HepG2 (cell line): ENCODE measurements at regions of chr1 and their contacts with region 1.

Region 1: DNA sequence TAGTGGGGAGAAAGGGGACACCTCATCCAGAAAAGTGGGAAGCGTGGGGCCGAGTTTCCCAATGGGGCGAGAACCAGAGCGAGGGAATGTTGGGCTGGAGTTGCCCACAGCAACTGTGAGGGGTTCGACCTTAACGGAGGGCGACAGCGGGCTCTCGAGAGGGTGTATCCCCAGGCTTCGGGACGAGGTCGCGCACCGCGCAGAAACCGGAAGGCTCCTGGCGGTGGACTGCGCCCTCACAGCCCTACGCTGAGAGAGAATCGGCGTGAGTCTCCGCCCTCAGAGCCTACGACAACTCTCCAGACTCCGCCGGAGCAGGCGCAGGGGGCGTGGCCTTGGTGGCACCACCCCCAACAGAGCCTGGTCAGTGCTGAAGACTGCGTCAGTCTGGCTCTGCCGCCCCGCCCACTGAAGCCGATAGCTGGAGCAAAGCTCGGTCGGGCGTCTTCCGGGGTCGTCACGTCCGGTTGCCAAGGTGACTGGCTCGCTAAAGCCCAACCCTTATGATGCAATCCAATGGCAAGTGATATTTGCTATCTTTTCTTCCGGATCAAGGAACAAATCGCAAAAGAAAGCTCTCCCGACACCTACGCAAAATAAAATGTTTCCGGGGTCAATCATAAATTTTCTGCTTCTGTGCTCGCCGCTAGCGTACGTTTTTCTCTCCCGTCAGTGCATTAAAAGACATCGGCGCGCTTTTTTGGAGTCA is at the start of gene LRIF1:
- DNase-seq: peak; percentile 99
- ATAC-seq: peak; percentile 99
- H3K4me3 ChIP-seq: peak within 1 kb of the TSS; percentile 79 to 92 (median 90)
- H3K27ac ChIP-seq: peak within 1 kb of the TSS; percentile 99
- H3K4me1 ChIP-seq: peaks cover 33% of the 10 kb centered on the region
- H3K27me3 ChIP-seq: no peaks in the 10 kb centered on the region; a peak in 1 of 5 replicates
- CTCF ChIP-seq: peak; percentile 47
- EP300 ChIP-seq: peak; percentile 3 to 7; a peak in 1 of 4 replicates
- POLR2A ChIP-seq: peak; percentile 98 to 100
- RAD21 ChIP-seq: no peak
- total RNA-seq, gene LRIF1: 42.4 and 67.4 TPM in 2 replicates

Region 2: DNA sequence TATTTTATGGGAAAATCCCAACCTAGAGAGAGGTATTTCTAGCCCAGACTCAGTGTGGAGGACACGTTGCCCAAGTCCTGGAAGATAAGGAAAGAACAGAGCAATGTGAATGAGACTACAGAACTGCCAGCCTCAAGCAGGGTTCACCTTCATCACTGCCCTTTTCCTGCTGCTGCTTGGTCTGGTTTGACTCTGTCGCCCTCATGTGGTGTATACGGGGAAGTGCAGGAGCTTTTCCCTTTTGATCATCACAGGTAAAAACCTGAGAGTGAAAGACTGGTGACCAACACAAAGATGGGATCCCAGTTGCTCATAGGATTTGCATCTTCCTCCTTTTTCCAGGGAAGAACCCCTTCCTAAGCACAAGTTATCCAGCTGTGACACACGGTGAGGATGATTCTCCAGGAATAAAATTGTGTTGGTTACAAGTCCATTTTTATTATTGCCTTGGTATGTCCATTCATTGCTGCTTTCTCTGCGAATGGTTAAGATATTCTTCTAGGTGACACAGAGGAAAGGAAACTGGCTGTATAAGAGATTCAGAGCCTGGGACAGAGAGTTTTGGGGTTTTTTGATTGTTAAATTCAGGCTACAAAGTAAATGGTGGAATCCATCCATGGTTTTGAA is 180.4 kb before region 1 on chr1:
- CTCF ChIA-PET with region 1: no interaction called
- POLR2A ChIA-PET with region 1: no interaction called
- in situ Hi-C with region 1: no loop called
- intact Hi-C with region 1: no loop called
- DNase-seq: peak; percentile 47
- ATAC-seq: peak; percentile 70
- H3K4me3 ChIP-seq: no peak overlapping the region
- H3K27ac ChIP-seq: no peak overlapping the region
- H3K4me1 ChIP-seq: no peaks in the 10 kb centered on the region
- H3K27me3 ChIP-seq: no peaks in the 10 kb centered on the region
- CTCF ChIP-seq: peak; percentile 86
- EP300 ChIP-seq: no peak
- POLR2A ChIP-seq: no peak
- RAD21 ChIP-seq: peak; percentile 48; the same call in 1 of the 2 replicates

Region 3: DNA sequence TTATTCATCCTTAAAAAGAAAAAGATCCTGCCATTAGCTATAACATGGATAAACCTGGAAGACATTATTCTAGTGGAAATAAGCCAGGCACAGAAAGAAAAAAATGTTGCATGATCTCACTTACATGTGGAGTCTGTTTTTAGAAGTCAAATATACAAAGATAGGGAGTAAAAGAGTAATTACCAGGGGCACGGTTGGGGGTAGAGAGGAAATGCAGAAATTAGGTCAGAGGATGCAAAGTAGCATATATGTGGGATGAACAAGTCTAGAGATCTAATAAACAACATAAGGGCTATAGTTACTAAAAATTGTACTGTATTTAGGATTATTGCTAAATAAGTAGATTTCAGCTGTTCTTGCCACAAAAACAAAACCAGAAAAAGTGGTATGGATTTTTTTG is 152.3 kb before region 1 on chr1:
- CTCF ChIA-PET with region 1: no interaction called
- POLR2A ChIA-PET with region 1: no interaction called
- in situ Hi-C with region 1: no loop called
- intact Hi-C with region 1: no loop called
- DNase-seq: no peak
- ATAC-seq: no peak
- H3K4me3 ChIP-seq: no peak overlapping the region
- H3K27ac ChIP-seq: no peak overlapping the region
- H3K4me1 ChIP-seq: no peaks in the 10 kb centered on the region
- H3K27me3 ChIP-seq: no peaks in the 10 kb centered on the region
- CTCF ChIP-seq: no peak
- EP300 ChIP-seq: no peak
- POLR2A ChIP-seq: no peak
- RAD21 ChIP-seq: no peak

Region 4: DNA sequence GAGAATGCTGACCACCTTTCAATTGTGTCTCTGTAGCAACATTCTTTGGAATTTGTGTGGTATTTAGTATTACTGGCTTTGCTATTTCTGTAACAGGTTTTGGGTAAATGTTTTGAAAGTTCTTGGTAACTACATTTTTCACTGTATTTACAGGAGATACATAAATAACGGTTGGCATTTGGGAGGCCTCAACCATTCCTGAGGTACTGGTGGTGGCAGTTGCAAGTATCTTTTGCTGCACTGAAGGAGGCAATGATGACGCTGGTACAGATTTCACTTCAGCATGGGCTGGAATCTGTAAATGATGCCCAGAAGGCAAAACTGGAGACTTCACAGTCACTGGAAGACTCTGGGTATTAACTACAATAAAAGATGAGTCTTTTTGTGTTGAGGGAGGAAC is 11.8 kb before region 1 on chr1:
- CTCF ChIA-PET with region 1: no interaction called
- POLR2A ChIA-PET with region 1: interaction called, 17 read pairs
- in situ Hi-C with region 1: no loop called
- intact Hi-C with region 1: no loop called
- DNase-seq: no peak
- ATAC-seq: no peak
- H3K4me3 ChIP-seq: no peak overlapping the region
- H3K27ac ChIP-seq: no peak overlapping the region
- H3K4me1 ChIP-seq: peaks cover 20% of the 10 kb centered on the region; the same call in 1 of the 2 replicates
- H3K27me3 ChIP-seq: no peaks in the 10 kb centered on the region
- CTCF ChIP-seq: no peak
- EP300 ChIP-seq: no peak
- POLR2A ChIP-seq: no peak
- RAD21 ChIP-seq: no peak

Region 5: DNA sequence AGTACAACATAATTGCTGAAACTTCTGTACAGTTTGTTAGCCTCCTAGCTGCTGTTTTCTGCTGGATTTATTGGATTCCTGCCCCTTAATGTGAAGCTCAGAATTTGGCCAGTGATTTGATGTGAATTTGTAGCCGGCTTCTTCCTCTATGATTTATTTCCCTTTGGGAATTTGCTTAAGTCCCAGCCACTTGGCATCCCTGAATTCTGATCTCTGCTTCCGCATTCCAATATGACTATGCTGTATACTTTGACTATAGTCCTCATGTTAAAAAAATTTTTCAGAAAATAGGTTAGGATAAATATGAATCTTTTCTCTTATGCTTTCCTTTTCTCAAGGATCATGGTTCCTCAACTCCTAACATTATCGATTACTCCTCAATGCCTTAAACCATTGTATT is 12.2 kb after region 1 on chr1:
- CTCF ChIA-PET with region 1: no interaction called
- POLR2A ChIA-PET with region 1: no interaction called
- in situ Hi-C with region 1: no loop called
- intact Hi-C with region 1: no loop called
- DNase-seq: no peak
- ATAC-seq: no peak
- H3K4me3 ChIP-seq: no peak overlapping the region
- H3K27ac ChIP-seq: no peak overlapping the region
- H3K4me1 ChIP-seq: no peaks in the 10 kb centered on the region
- H3K27me3 ChIP-seq: no peaks in the 10 kb centered on the region
- CTCF ChIP-seq: no peak
- EP300 ChIP-seq: no peak
- POLR2A ChIP-seq: no peak
- RAD21 ChIP-seq: no peak

Region 6: GRCh38 chr1:111045033-111045722 is 81.3 kb after region 1 on chr1:
- CTCF ChIA-PET with region 1: no interaction called
- POLR2A ChIA-PET with region 1: interaction called, 11 read pairs
- in situ Hi-C with region 1: no loop called
- intact Hi-C with region 1: no loop called
- DNase-seq: peak; percentile 93
- ATAC-seq: peak; percentile 100
- H3K4me3 ChIP-seq: peak overlapping the region in 2 of 3 experiments; percentile 17 to 50; a peak in 2 of 6 replicates
- H3K27ac ChIP-seq: peak overlapping the region; percentile 99
- H3K4me1 ChIP-seq: peaks cover 34% of the 10 kb centered on the region
- H3K27me3 ChIP-seq: no peaks in the 10 kb centered on the region; a peak in 1 of 5 replicates
- CTCF ChIP-seq: no peak
- EP300 ChIP-seq: peak; percentile 61 to 69; a peak in 2 of 4 replicates
- POLR2A ChIP-seq: peak in 1 of 2 experiments; percentile 42; a peak in 1 of 4 replicates
- RAD21 ChIP-seq: no peak

Region 7: DNA sequence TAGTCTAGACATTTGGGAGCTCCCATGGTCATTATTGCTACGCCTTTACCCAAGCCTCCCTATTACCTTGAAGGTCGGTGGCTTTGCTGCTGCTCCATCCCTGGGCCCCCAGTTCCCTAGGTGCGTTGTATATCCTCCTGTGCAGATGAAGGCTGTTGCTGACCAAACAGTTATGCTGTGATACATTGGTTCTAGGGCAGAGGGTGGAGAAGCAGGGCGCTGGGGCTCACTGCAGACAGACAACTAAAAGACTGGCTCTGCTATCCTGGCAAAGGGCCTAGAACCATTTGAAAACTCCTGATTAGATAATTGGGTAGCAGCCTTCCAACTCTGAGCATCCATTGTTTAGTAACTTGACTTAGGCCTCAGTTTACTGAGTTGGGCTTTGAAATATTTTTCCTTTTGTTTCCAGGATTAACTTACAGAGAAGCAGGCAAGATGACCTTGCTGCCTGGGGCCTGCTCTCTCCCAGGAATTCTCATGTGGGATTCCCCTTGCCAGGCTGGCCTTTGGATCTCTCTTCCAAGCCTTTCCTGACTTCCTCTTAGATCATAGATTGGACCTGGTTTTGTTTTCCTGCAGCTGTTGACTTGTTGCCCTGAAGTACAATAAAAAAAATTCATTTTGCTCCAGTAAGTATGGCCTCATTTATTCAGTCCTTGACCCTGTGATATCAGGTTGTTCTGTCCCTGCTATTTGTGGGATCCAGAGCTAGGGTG is 279.1 kb after region 1 on chr1:
- CTCF ChIA-PET with region 1: no interaction called
- POLR2A ChIA-PET with region 1: no interaction called
- in situ Hi-C with region 1: no loop called
- intact Hi-C with region 1: no loop called
- DNase-seq: peak; percentile 38
- ATAC-seq: peak; percentile 45; the same call in 1 of the 3 replicates
- H3K4me3 ChIP-seq: no peak overlapping the region
- H3K27ac ChIP-seq: peak overlapping the region; percentile 54
- H3K4me1 ChIP-seq: peaks cover 81% of the 10 kb centered on the region
- H3K27me3 ChIP-seq: no peaks in the 10 kb centered on the region
- CTCF ChIP-seq: no peak
- EP300 ChIP-seq: no peak
- POLR2A ChIP-seq: no peak
- RAD21 ChIP-seq: no peak